Activated naive CD8-positive, alpha-beta T cell treated with anti-CD3 and anti-CD28 coated beads, Interleukin-2, amount 10 ng/mL, durations not matched to agents 7 days and 5 days (primary cell): ENCODE measurements at regions of chr5 and their contacts with region 1.

Region 1: GRCh38 chr5:100903039-100903887 is at the start of gene ST8SIA4:
- DNase-seq: peak; percentile 85
- ATAC-seq: peak; percentile 80
- H3K4me3 Mint-ChIP-seq: peak within 1 kb of the TSS; percentile 95
- H3K27ac Mint-ChIP-seq: peak within 1 kb of the TSS; percentile 97
- H3K4me1 Mint-ChIP-seq: peaks cover 28% of the 10 kb centered on the region
- H3K27me3 Mint-ChIP-seq: no peaks in the 10 kb centered on the region
- total RNA-seq, gene ST8SIA4: 37.0 to 39.2 TPM

Region 2: DNA sequence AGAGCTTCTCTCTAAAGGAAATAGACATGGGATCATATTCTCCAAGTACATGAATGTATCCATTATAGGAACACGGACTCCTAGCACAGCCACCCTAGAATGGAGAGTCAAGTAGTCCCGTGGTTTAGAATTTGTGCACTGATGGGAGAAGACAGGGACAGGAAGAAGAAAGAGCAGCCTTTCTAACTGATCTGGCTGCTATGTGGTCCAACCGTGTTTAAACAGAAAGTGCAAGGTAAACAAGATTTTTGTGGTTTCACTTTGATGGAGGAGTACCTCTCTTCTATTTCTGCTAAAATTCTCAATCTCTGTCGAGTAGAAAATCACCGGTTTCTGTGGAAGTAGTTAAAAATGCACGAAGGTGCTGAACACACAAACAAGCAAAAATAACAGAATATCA is 171.5 kb before region 1 on chr5:
- POLR2A ChIA-PET with region 1: interaction called, 17 read pairs
- DNase-seq: no peak
- ATAC-seq: peak; percentile 92
- H3K4me3 Mint-ChIP-seq: peak overlapping the region; percentile 83
- H3K27ac Mint-ChIP-seq: peak overlapping the region; percentile 88
- H3K4me1 Mint-ChIP-seq: peaks cover 9% of the 10 kb centered on the region
- H3K27me3 Mint-ChIP-seq: no peaks in the 10 kb centered on the region

Region 3: DNA sequence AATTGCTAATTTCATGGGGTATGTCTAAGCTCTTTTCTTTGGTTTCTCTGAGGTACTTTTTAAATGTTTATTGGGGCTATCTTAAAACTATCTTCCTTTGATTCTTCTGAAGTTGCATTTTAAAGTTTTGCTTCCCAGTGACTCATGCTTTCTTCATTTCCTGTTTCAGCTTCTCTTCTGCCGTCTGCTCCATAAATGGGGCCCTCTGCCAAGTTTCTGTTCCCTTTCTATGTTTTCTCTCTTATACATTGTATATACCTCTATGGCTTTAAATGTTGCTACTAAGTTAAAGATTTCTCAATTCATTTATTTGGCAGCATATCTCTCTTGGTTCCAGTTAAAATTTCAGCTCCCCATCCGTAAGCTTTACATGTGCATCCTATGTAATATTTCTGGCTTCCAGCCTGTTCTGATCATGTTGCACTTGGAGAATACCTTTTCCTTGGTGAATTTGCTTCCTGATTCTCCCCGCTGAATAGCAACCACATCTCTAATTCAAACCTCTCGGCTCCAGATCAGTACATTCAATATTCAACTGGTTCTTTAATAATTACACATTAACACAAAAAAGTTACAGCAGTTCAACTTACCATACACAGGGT is 125.5 kb before region 1 on chr5:
- POLR2A ChIA-PET with region 1: interaction called, 72 read pairs
- DNase-seq: no peak
- ATAC-seq: peak; percentile 46
- H3K4me3 Mint-ChIP-seq: peak overlapping the region; percentile 59
- H3K27ac Mint-ChIP-seq: peak overlapping the region; percentile 78
- H3K4me1 Mint-ChIP-seq: peaks cover 23% of the 10 kb centered on the region
- H3K27me3 Mint-ChIP-seq: no peaks in the 10 kb centered on the region

Region 4: DNA sequence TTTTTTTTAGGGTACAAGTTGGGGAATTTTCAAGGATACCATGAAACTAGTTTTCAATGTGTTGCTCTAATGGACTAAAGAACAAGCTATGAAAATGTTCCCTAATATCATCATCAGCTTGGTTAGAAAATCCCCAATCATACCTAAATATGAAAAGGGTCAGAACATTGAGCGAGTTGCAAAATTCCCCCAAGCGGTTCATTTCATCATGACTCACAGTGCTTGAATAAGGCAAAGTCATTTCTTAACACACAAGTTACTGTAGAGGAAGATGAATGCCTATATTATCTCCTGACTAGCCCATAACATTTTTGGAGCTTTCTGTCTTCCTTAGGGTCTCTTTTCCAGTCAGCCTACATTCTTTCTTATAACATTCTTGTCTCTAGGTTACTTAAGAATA is 62.9 kb before region 1 on chr5:
- POLR2A ChIA-PET with region 1: interaction called, 13 read pairs
- DNase-seq: no peak
- ATAC-seq: peak; percentile 70
- H3K4me3 Mint-ChIP-seq: peak overlapping the region; percentile 61
- H3K27ac Mint-ChIP-seq: peak overlapping the region; percentile 74
- H3K4me1 Mint-ChIP-seq: peaks cover 29% of the 10 kb centered on the region
- H3K27me3 Mint-ChIP-seq: no peaks in the 10 kb centered on the region

Region 5: DNA sequence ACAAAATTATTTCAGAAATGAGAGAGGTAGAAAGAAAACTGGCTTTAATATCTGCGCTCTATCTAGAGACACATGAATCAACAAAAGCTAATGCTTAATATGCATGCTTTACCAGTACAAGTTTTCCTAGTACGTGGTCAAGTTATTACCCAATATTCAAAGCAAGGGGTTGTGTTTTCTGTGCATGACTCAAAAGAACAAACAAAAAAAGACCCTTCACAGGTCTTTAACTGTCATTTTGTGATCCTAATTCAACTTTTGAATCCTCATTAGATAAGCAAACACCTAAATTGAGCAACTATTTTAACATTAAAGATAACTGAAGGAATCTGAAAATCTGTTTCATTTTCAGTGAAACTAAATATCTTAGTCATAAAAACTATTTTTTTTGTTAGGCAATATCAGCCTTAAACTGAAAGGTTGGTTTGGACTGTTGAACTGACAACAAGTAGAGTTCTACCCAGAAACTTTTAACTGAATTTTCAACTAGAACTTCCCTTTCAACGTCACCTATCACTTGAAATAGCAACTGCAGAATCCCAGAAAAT is 12.7 kb before region 1 on chr5:
- POLR2A ChIA-PET with region 1: interaction called, 47 read pairs
- DNase-seq: no peak
- ATAC-seq: peak; percentile 16
- H3K4me3 Mint-ChIP-seq: peak overlapping the region; percentile 79
- H3K27ac Mint-ChIP-seq: peak overlapping the region; percentile 82
- H3K4me1 Mint-ChIP-seq: peaks cover 36% of the 10 kb centered on the region
- H3K27me3 Mint-ChIP-seq: no peaks in the 10 kb centered on the region

Region 6: GRCh38 chr5:100950985-100951384 is 47.7 kb after region 1 on chr5:
- POLR2A ChIA-PET with region 1: no interaction called
- DNase-seq: no peak
- ATAC-seq: no peak
- H3K4me3 Mint-ChIP-seq: no peak overlapping the region
- H3K27ac Mint-ChIP-seq: no peak overlapping the region
- H3K4me1 Mint-ChIP-seq: no peaks in the 10 kb centered on the region
- H3K27me3 Mint-ChIP-seq: no peaks in the 10 kb centered on the region